ENCODE measurements at regions of chr2 and their contacts with region 1.

Region 1: DNA sequence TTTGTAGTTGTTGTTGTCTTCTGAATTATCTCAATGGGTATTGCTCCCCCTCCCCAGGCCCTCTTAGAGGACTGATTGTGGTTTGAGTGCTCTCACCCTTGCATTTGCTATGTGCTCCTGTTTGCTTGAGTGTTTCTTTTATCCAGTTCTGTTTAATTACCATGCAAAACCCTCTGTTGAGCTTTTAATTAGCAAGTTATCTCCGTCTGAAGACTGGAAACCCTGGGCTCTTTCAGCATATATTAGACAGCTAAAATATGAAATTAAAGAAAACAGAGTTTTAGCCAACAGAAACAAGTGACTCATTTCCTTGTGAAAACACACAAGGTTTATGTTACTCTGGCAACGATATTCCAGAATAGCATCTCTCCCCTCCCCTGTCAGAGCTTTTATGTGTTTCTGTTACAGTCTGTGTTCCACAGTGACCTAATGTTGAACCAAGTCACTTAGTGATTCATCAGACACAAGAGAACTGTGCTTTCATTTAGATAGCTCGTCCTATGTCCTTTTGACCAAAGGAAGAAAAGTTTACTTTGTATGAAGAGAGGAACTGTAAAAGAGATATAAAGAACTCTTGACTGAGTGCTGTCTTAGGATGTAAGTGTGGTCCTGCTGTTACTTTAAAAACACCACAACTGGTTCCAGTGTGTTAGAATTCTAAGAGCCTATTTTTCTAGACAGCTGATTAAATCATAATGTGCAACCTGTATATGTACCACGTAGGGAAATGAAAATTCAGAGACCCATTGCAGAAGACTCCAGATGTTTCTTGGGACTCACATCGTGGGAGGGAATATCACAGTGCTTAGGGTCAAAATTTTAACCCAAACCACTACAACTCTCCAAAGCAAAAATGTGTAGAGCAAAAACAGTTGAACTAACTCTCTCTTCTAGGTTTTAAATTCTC is 172.8 kb upstream of the RBMS1 start:
- DNase-seq: no peak
- ATAC-seq: no peak
- H3K4me3 ChIP-seq: no peak overlapping the region
- H3K27ac ChIP-seq: no peak overlapping the region
- H3K4me1 ChIP-seq: no peaks in the 10 kb centered on the region
- H3K27me3 ChIP-seq: no peaks in the 10 kb centered on the region
- CTCF ChIP-seq: no peak
- EP300 ChIP-seq: no peak
- POLR2A ChIP-seq: no peak
- RAD21 ChIP-seq: no peak

Region 2: DNA sequence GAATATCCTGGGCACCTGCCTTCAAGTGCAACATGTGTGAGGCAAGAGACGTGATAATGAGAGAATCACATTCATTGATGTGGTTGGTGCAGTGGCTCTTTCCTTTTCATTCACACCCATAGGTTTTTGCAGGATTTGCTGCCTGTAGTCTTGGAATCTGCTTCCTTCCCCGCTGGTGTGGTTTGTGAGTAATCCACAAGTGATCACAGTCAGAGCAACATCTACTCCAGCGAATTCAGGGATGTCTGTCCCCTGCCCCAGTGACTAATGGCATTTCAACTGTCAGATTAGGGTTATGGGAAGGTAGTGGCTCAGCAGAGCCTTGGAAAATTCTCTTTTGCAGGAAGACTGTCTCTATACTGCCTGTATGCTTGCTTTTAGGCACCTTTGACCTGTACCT is 52.7 kb after region 1 on chr2:
- CTCF ChIA-PET with region 1: no interaction called
- POLR2A ChIA-PET with region 1: no interaction called
- in situ Hi-C with region 1: no loop called
- intact Hi-C with region 1: no loop called
- DNase-seq: no peak
- ATAC-seq: no peak
- H3K4me3 ChIP-seq: no peak overlapping the region
- H3K27ac ChIP-seq: no peak overlapping the region
- H3K4me1 ChIP-seq: no peaks in the 10 kb centered on the region
- H3K27me3 ChIP-seq: no peaks in the 10 kb centered on the region
- CTCF ChIP-seq: no peak
- EP300 ChIP-seq: no peak
- POLR2A ChIP-seq: no peak
- RAD21 ChIP-seq: no peak

Region 3: DNA sequence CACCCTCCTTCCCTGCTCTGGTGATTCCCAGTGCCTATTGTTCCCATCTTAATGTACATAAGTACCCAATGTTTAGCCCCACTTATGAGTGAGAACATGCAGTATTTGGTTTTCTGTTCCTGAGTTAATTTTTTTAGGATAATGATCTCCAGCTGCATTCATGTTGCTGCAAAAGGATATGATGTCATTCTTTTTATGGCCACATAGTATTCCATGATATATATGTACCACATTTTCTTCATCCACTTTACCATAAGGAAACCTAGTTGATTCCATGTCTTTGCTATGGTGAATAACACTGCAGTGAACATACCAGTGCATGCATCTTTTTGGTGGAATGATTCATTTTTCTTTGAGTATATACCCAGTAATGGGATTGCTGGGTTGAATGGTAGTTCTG is 1142.2 kb after region 1 on chr2:
- CTCF ChIA-PET with region 1: no interaction called
- POLR2A ChIA-PET with region 1: no interaction called
- in situ Hi-C with region 1: no loop called
- intact Hi-C with region 1: loop called (anchors 10 kb)
- DNase-seq: no peak
- ATAC-seq: no peak
- H3K4me3 ChIP-seq: no peak overlapping the region
- H3K27ac ChIP-seq: no peak overlapping the region
- H3K4me1 ChIP-seq: no peaks in the 10 kb centered on the region
- H3K27me3 ChIP-seq: no peaks in the 10 kb centered on the region
- CTCF ChIP-seq: no peak
- EP300 ChIP-seq: no peak
- POLR2A ChIP-seq: no peak
- RAD21 ChIP-seq: no peak

Measured in K562 (cell line).